OCI-LY7 (cell line): ENCODE measurements at regions of chr19 and their contacts with region 1.

Region 1: GRCh38 chr19:1551068-1552040 is 16.8 kb downstream of the MEX3D start:
- DNase-seq: no peak
- H3K4me3 ChIP-seq: no peak overlapping the region
- H3K27ac ChIP-seq: no peak overlapping the region
- H3K4me1 ChIP-seq: no peaks in the 10 kb centered on the region
- CTCF ChIP-seq: no peak

Region 2: GRCh38 chr19:1295169-1296012 is 256.0 kb before region 1 on chr19:
- CTCF ChIA-PET with region 1: no interaction called
- POLR2A ChIA-PET with region 1: no interaction called
- intact Hi-C with region 1: no loop called
- DNase-seq: peak; percentile 48
- H3K4me3 ChIP-seq: no peak overlapping the region
- H3K27ac ChIP-seq: no peak overlapping the region
- H3K4me1 ChIP-seq: peaks cover 34% of the 10 kb centered on the region
- CTCF ChIP-seq: no peak

Region 3: DNA sequence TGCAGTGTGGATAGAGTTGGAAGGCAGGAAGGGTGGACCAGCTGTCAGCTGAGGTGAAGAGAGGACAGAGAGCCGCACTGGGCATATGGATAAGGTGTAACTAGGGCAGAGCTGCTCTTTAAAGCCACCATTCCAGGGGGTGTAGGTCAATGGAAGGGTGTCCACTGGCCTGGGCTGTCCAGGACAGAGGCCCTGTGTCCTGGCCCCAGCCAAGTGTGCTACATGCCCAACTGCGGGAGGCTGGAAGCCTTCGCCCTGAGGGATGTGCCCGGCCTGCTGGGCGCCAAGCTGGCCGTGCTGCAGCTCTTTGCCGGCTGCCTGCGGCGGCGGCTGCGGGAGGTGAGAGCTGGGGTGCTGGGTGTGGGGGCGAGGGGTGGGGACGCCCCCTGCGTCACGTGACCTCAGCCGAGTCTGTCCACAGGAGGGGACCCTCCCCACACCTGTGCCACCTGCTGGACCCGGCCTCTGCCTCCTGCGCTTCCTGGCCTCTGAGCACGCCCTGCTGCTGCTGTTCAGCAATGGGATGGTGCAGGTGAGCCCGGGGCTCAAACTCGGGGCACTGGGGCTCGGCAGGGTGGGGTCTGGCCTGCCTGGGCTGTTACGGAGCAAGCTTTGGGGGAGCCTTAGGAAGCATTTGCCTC is 17.7 kb before region 1 on chr19:
- CTCF ChIA-PET with region 1: no interaction called
- POLR2A ChIA-PET with region 1: no interaction called
- intact Hi-C with region 1: no loop called
- DNase-seq: no peak
- H3K4me3 ChIP-seq: no peak overlapping the region
- H3K27ac ChIP-seq: no peak overlapping the region
- H3K4me1 ChIP-seq: no peaks in the 10 kb centered on the region
- CTCF ChIP-seq: no peak

Region 4: DNA sequence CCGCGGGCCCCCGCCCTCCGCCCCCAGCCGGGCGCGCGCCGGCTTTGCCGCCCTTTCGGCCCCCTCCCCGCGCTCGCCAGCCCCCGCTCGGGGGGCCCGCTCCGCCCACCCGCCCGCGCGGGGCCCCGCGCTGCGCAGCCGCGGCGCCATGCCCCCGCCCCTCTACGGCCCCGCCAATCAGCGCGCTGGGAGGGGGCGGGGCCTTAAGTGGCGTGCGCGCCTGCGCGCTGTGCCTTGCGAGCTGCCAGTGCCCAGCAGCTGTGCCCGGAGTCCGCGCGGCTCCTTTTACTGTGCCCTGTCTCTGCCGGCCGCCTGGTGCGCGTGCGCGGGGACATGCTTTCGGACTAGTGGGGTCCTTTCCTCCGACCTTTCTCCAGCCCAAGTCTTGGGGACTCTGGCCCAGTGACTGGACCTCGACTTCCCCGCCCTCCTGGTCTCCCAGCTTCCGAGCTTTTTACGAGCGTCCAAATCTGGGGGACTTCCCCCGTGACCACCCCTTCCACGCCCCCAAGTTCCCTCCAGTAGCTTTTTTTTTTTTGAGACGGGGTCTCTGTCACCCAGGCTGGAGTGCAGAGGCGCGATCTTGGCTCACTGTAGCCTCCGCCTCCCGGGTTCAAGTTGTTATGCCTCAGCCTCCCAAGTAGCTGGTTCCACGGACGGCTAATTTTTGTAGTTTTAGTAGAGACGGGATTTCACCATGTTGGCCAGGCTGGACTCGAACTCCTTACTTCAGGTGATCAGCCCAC is 41.6 kb after region 1 on chr19 and contains the start of gene MBD3:
- CTCF ChIA-PET with region 1: interaction called, 3 read pairs
- POLR2A ChIA-PET with region 1: no interaction called
- intact Hi-C with region 1: loop called (anchors 1 kb)
- DNase-seq: peak; percentile 95
- H3K4me3 ChIP-seq: peak within 1 kb of the TSS; percentile 100
- H3K27ac ChIP-seq: peak within 1 kb of the TSS; percentile 92
- H3K4me1 ChIP-seq: peaks cover 23% of the 10 kb centered on the region
- CTCF ChIP-seq: no peak
- total RNA-seq, gene MBD3: 147 and 172 TPM in 2 replicates

Region 5: DNA sequence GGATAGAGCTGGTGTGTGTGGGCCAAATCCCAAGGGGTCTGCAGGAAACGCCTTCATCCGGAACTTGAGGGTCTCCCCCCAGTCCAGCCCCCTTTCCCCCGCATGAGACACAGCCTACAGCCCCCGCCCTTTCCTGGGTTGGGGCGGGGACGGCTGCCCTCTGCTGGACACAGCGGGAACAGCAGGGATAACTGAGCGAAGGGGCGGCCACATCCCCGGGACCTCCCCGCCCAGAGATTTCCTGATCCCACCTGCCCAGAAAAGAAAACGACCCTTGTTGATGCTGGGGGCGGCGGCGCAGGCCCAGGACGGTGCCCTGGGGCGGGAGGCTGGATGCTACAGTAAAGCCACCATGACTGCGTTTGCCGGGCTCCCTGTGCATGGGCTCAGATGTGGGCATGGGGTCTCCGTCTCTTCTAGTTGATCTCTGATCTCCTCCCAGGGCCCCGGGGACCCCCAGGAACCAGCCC is 216.1 kb after region 1 on chr19:
- CTCF ChIA-PET with region 1: no interaction called
- POLR2A ChIA-PET with region 1: no interaction called
- intact Hi-C with region 1: loop called (anchors 1 kb)
- DNase-seq: peak; percentile 62
- H3K4me3 ChIP-seq: no peak overlapping the region
- H3K27ac ChIP-seq: no peak overlapping the region
- H3K4me1 ChIP-seq: peaks cover 10% of the 10 kb centered on the region
- CTCF ChIP-seq: peak; percentile 91